ENCODE measurements at regions of chr1 and their contacts with region 1.

Region 1: DNA sequence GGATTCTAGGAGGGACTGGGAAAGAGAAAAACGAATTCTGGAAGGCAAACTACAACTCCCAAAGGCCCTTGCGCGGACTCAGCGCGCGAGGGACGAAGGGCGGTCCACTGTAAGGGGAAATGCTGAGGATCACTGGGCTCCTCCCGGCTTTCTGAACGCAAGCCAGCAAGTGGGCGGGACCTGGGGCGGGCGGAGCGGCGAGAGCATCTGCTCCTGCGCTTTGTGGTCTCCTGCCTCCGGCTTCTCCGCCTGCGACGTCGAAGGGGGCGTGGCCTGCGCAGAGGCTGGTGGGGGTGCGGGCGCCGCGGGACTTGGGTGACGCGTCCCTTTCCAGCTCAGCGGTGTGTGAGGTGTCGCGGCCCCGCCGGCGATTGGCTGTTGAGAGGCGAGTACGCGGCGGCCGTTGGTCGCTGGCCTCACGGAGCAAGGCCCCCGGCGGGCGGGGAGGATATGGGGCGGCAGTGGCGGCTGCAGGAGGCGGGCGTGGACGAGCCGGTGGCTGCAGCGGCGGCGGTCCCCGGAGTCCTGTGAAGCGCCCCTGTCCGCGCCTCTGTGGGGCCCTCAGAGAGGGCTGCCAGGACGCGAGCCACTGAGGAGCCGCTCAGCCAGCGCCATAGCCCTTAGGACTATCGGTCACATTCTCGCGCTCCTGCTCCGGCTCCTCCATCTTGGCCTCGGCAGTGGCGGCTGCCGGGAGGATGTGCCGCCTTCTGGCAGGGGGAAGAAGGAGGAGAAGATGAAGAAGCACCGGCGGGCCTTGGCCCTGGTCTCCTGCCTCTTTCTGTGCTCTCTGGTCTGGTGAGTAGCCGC is at the start of gene SUCO:
- DNase-seq: peak; percentile 99
- H3K4me3 ChIP-seq: peak within 1 kb of the TSS; percentile 89
- H3K27ac ChIP-seq: peak within 1 kb of the TSS; percentile 91
- H3K27me3 ChIP-seq: peaks cover 11% of the 10 kb centered on the region
- CTCF ChIP-seq: peak; percentile 17; the same call in 1 of the 2 replicates
- polyA plus RNA-seq, gene SUCO: 17.6 and 25.1 TPM in 2 replicates

Region 2: GRCh38 chr1:172510479-172510878 is 22.4 kb before region 1 on chr1:
- CTCF ChIA-PET with region 1: interaction called, 10 read pairs
- POLR2A ChIA-PET with region 1: no interaction called
- DNase-seq: no peak
- H3K4me3 ChIP-seq: no peak overlapping the region
- H3K27ac ChIP-seq: no peak overlapping the region
- H3K27me3 ChIP-seq: peaks cover 4% of the 10 kb centered on the region
- CTCF ChIP-seq: no peak

Region 3: DNA sequence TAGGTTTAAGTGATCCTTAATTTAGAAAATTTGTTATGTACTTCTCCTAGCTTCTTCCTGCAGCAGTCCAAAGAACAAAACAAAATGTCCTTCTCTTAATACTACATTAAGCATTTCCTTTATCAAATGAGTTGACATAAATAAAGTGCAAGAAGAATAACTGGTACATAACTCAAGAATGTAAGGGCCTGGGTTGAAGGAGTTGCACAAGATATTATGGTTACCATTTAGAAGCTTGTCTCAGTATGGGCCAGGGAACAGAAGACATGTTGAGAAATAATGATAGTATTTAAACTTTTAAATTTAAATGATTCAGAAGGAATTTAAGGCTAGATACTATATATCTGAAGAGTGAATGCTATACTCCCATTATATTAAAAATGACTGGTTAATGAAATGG is 23.6 kb after region 1 on chr1:
- CTCF ChIA-PET with region 1: no interaction called
- POLR2A ChIA-PET with region 1: no interaction called
- DNase-seq: no peak
- H3K4me3 ChIP-seq: no peak overlapping the region
- H3K27ac ChIP-seq: no peak overlapping the region
- H3K27me3 ChIP-seq: no peaks in the 10 kb centered on the region
- CTCF ChIP-seq: no peak

Region 4: DNA sequence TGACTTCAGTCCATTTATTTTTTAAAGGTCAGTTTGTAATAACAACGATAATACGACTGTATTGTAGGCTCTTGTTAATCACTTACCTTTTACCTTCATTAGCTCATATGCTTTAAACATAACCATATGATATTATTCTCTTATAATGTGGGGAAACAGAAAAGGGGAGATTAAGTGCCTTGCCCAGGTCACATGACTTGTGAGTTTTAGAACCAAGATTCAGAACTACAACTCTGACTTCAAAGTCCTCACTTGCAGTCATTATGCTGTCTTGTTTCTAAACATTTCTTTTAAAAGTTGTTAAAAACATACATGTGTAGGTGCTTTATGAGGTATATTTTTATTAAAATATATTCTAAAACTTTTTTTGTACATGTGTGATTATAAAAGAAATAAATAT is 41.2 kb after region 1 on chr1:
- CTCF ChIA-PET with region 1: no interaction called
- POLR2A ChIA-PET with region 1: no interaction called
- DNase-seq: no peak
- H3K4me3 ChIP-seq: no peak overlapping the region
- H3K27ac ChIP-seq: no peak overlapping the region
- H3K27me3 ChIP-seq: no peaks in the 10 kb centered on the region
- CTCF ChIP-seq: no peak